ENCODE measurements at regions of chr17 and their contacts with region 1.

Region 1: GRCh38 chr17:63984651-63985386 is 12.1 kb upstream of the SCN4A start:
- DNase-seq: peak; percentile 93
- H3K4me3 ChIP-seq: no peak overlapping the region
- H3K27ac ChIP-seq: no peak overlapping the region
- H3K4me1 ChIP-seq: peaks cover 21% of the 10 kb centered on the region
- H3K27me3 ChIP-seq: no peaks in the 10 kb centered on the region
- CTCF ChIP-seq: no peak
- POLR2A ChIP-seq: no peak

Region 2: DNA sequence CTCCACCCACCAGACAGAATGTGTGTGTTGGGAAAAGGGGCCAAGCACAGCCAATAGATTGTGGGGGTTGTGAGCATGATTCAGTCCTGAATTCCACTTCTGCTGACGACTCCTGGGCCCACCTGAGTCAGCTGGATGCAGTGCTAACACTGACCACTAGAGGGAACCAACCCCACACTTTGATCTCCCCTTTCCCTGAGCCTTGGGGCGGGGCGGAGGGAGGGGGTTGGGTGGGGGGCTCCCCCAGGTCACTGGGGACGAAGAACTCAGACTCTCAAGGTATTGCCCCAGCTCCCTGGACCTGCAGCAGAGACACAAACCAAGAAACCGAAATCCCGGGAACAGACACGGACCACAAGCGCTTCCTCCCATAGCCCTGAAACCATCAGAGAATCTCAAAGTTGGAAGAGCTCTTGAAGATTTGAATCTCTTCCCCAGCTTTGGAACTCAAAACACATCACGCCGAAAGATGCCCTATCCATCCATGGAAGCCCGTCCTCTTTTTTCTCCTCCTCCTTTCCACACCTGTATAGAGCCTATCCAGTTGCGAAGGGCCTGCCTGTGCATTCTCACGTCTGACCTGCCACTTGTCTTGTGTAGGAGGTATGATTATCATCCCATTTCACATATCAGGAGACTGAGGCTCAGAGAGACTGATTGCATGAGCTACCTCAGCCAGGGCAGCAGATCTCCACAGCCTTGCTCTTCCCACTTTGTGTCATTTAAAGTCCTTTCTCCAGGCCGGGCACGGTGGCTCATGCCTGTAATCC is 73.0 kb before region 1 on chr17:
- CTCF ChIA-PET with region 1: interaction called, 183 read pairs
- POLR2A ChIA-PET with region 1: no interaction called
- dilution Hi-C with region 1: no loop called
- intact Hi-C with region 1: no loop called
- DNase-seq: peak; percentile 26
- H3K4me3 ChIP-seq: no peak overlapping the region
- H3K27ac ChIP-seq: no peak overlapping the region
- H3K4me1 ChIP-seq: no peaks in the 10 kb centered on the region
- H3K27me3 ChIP-seq: peaks cover 6 to 8% of the 10 kb centered on the region in 2 experiments
- CTCF ChIP-seq: peak; percentile 34 to 70
- POLR2A ChIP-seq: no peak

Region 3: GRCh38 chr17:63974594-63975192 is 10.1 kb before region 1 on chr17:
- CTCF ChIA-PET with region 1: interaction called, 10 read pairs
- POLR2A ChIA-PET with region 1: no interaction called
- dilution Hi-C with region 1: no loop called
- intact Hi-C with region 1: no loop called
- DNase-seq: peak; percentile 51
- H3K4me3 ChIP-seq: no peak overlapping the region
- H3K27ac ChIP-seq: peak overlapping the region; percentile 13
- H3K4me1 ChIP-seq: peaks cover 13% of the 10 kb centered on the region
- H3K27me3 ChIP-seq: no peaks in the 10 kb centered on the region
- CTCF ChIP-seq: no peak
- POLR2A ChIP-seq: no peak

Measured in endothelial cell of umbilical vein (primary cell).